Posterior vena cava (tissue), 2 donors: ENCODE measurements at regions of chr2 and their contacts with region 1.

Region 1: DNA sequence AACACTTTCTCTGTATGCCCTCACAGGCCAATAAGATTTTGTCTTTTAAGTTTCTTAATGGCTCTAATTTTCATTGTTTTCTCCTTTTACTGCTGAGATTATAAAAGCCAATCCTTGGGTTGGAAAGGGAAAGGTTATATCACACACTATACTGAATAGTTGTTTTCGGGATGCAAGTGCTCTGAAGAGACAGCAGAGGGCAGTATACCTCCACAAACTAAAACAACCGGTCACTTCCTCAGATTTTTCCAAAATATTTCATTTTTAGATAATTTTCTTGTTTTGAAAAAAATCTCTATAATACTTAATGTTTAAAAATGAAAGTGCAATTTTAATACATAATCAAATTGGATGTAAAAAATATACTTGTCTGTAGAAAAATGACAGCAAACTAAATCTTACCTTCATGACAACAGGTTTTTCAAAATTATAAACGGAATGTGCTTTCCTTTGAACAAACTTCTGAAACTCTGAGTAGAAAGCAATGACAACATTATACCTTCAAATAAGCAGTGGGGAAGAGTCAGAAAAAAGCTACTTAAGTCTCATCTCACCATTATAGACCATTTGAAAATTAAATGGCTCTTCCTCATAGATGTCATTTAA is 82.7 kb downstream of the ORC4 start:
- DNase-seq: no peak

Region 2: GRCh38 chr2:148509288-148509902 is 571.5 kb after region 1 on chr2:
- intact Hi-C with region 1: loop called in 1 of 2 experiments (anchors 10 kb)
- DNase-seq: peak; percentile 95

Region 3: GRCh38 chr2:148527488-148528340 is 589.9 kb after region 1 on chr2:
- intact Hi-C with region 1: loop called in 1 of 2 experiments (anchors 5 kb)
- DNase-seq: no peak